ENCODE measurements at regions of chr4 and their contacts with region 1.

Region 1: GRCh38 chr4:42865572-42866189 is 26.8 kb upstream of the GRXCR1 start:
- DNase-seq: peak; percentile 71
- H3K4me3 Mint-ChIP-seq: no peak overlapping the region
- H3K27ac Mint-ChIP-seq: no peak overlapping the region
- H3K4me1 Mint-ChIP-seq: no peaks in the 10 kb centered on the region
- H3K27me3 Mint-ChIP-seq: peaks cover 18% of the 10 kb centered on the region

Region 2: DNA sequence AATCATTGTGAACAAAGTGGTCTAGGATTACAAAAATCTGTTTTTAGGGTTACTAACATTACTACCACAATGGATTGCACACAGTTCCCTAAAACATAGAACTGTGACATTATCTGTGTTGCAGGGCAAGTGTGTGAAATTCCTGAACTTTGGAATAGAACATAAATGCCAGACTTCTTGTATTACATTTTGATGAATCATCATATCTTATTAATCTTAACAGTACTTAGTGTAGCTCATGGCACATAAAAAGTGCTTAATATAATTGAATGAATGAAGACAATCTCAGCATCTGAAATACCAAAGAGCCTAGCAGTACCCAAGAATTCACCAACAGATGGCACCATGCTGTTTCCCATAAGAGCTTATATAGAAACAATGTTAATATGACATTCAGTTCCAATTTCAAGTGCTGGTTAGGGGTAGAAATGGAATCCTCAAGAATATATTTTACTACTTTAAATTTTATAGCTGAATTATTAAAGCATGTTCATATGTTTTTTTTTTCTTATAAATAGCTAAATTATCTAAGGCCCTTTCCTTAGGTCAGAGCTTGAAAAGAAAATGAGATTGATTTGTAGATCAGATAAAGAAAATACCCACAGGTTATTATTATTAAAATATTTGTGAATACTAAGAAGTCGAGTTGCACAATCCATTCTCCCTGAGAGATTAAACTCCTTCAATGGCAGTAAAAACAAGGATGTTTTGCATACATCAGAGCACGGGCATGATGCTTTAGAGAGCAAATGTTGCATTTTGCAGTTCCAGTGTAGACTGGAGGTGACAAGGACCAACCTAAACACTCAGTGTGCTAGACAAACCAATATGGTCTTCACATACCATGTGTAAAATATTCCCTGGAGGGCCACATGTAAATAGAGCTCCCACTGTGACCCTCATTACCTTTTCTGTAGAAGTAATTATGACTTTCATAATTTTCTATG is 494.1 kb before region 1 on chr4:
- CTCF ChIA-PET with region 1: no interaction called
- intact Hi-C with region 1: loop called (anchors 1 kb)
- DNase-seq: peak; percentile 17
- H3K4me3 Mint-ChIP-seq: no peak overlapping the region
- H3K27ac Mint-ChIP-seq: no peak overlapping the region
- H3K4me1 Mint-ChIP-seq: no peaks in the 10 kb centered on the region
- H3K27me3 Mint-ChIP-seq: peaks cover 18% of the 10 kb centered on the region

Region 3: DNA sequence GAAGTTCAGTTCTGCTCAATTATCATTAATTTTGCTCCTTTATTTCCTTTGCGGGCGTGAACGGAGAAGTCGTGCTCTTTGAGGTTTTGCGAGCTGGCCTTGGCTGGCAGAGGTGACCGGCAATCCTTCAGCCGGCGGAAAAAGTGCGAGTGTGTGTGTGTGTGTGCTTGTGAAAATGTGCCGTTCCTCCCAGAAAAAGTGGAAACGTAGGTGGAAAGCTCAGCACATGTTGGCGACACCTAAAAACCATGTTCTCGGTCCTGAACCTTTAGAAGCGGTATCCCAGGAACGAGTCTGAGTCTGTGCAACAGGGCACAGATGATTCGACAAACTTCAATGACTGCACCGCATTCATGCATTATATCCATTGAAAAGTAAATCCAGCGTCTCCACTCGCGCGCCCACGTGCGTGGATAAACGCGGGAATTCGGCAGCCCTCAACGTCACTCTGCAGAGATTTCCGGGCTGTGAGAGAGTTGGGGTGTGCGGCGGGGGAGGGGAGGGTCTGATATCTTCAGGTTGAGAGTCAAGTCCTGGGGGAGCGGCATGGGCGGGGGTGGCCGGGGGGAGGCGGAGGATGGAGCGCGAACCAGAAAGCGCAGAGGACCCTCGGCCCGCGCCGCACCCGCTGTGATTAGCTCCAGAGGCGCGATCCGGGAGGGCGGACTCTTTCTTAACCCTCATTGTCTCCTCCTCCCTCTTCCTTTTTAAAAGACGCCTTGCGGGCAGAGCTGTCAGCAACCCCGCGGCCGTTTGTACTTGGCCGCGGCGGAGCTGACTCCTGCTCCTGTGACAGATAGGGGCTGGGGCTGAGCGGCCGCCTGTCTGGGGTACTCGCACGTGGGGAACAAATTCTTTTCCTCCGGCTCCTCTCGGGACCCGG is 468.7 kb before region 1 on chr4 and contains the start of gene SHISA3:
- CTCF ChIA-PET with region 1: no interaction called
- intact Hi-C with region 1: loop called (anchors 10 kb)
- DNase-seq: peak; percentile 43
- H3K4me3 Mint-ChIP-seq: peak within 1 kb of the TSS; percentile 72
- H3K27ac Mint-ChIP-seq: no peak within 1 kb of the TSS
- H3K4me1 Mint-ChIP-seq: peaks cover 27% of the 10 kb centered on the region
- H3K27me3 Mint-ChIP-seq: peaks cover 52% of the 10 kb centered on the region
- total RNA-seq, gene SHISA3: 0.72 to 0.77 TPM

Region 4: DNA sequence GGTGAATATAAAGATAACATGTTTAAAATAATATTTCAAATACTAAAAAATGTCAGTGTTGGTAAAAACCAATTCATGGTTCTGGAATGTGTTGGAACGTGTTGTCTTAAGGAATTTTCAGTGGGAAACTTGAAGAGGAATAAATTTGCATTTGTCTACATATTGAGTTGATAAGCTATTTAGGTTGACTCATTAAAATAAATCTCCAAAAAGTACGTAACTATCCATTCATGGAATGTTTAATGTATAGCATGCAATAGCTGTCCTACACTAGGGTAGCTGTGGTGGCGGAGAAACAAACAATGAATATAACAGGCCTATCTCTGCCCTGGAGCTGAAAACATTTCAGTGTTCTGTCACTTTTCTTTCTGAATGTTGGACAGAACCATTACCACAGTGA is 448.1 kb before region 1 on chr4:
- CTCF ChIA-PET with region 1: no interaction called
- intact Hi-C with region 1: no loop called
- DNase-seq: no peak
- H3K4me3 Mint-ChIP-seq: no peak overlapping the region
- H3K27ac Mint-ChIP-seq: no peak overlapping the region
- H3K4me1 Mint-ChIP-seq: no peaks in the 10 kb centered on the region
- H3K27me3 Mint-ChIP-seq: no peaks in the 10 kb centered on the region

Region 5: GRCh38 chr4:42519803-42520417 is 345.8 kb before region 1 on chr4:
- CTCF ChIA-PET with region 1: interaction called, 3 read pairs
- intact Hi-C with region 1: loop called (anchors 1 kb)
- DNase-seq: peak; percentile 71
- H3K4me3 Mint-ChIP-seq: no peak overlapping the region
- H3K27ac Mint-ChIP-seq: no peak overlapping the region
- H3K4me1 Mint-ChIP-seq: no peaks in the 10 kb centered on the region
- H3K27me3 Mint-ChIP-seq: no peaks in the 10 kb centered on the region